GM13976 (cell line): ENCODE measurements at regions of chr17 and their contacts with region 1.

Region 1: GRCh38 chr17:27862004-27862403 is 31.2 kb downstream of the LYRM9 start:
- DNase-seq: no peak
- CTCF ChIP-seq: no peak

Region 2: GRCh38 chr17:27353461-27354050 is 508.4 kb before region 1 on chr17:
- in situ Hi-C with region 1: loop called (anchors 10 kb)
- DNase-seq: peak; percentile 98
- CTCF ChIP-seq: peak; percentile 92

Region 3: DNA sequence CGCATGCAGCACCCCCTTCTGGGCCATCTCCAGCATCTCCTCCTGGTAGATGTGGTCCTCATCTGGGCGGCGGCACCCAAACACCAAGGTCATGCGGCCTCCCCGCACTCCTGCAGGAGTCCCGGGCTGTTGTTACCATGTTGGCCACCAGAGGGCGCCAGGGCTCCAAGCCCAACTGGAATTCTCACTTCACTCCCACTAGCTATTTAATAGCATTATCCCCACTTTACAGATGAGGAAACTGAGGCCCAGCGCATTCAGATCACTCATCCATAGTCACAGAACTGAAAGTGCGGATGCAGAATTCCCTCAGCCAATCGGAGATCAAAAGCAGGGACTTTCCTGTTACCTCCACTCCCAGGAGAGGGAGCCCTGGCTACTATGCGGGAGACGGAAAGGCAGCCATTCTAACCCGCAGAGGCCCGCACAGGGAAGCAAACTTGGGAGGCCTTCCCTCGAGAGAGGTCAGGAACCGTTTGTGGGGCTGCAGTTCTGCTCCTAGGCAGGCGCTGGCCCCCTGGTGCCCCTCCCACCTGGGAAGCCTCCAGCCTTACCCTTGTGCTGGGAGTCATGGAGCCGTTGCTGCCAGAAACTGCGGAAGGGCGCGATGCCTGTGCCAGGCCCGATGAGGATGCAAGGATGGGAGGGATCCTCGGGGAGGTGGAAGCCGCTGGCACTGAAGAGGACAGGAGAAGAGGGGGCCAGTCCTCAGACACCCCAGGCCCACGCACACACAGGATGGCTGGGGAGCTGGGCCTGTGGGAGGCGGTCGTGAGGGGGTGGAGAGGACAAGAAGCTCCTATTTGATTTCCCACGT is 101.7 kb before region 1 on chr17:
- in situ Hi-C with region 1: no loop called
- DNase-seq: peak; percentile 82
- CTCF ChIP-seq: peak; percentile 88

Region 4: DNA sequence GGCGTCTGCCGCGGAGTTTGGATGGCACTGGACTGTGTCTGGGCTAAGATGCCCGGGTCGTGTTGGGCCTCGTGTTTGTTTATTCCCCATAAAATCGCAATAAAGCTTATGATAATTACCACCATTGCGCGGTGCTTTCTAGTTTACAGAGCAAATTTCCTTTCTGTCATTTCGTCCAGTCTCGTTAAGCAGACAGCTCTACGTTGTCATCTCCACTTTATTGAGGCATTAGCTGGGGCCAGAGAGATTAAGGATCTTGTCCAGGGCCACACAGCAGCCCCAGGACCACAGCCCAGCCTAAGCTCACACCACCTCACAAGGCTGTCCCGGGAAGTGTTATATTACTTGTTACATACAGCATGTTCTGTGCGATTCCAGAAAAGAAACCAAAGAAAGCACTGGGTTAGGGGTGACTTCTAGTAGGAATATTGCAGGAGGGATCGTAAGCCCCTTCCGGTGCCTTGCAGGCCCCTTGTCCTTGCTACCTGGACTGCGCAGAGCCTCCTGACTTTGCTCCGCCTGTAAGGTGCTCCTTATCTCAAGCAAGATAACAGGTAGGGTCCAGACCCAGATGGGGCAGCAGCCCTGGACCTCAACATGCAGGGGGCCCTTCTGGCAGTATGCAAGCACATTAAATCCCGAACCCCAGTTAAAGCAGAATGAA is 68.0 kb before region 1 on chr17:
- in situ Hi-C with region 1: no loop called
- DNase-seq: no peak
- CTCF ChIP-seq: no peak